CD8-positive, alpha-beta T cell (primary cell): ENCODE measurements at regions of chr17 and their contacts with region 1.

Region 1: DNA sequence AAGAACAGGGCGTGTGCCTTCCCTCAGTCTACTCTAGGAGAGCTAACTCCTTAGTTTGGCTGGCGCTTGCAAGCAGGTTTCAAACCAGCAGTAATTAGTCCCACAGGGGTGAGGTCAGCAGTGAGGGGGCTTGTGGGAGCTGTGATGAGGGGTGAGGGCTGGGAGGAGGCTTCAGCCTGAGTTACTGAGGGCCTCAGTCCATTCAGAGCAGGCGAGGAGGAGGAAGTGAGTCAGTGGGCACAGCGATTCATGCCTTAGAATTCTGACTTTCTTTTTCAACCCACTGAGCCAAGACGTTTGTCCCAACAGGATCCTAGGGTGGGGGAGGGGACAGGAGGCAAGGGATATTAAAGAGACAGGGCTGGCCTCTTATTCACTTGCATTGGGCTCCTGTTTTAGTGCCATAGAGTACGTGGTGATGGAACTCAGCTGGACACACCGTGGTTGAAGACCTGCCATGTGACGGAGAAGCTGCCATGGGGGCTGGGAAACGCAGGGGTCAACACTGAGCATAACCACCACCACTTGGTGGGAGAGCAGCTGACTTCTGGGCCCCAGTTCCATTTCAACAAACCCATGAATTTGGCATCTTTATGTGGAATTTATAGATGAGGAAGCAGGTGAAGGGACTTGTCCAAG is 8.3 kb upstream of the ITGA3 start:
- DNase-seq: no peak
- ATAC-seq: no peak
- H3K4me3 ChIP-seq: no peak overlapping the region
- H3K4me3 Mint-ChIP-seq: no peak overlapping the region
- H3K27ac ChIP-seq: no peak overlapping the region
- H3K27ac Mint-ChIP-seq: no peak overlapping the region
- H3K4me1 ChIP-seq: no peaks in the 10 kb centered on the region
- H3K4me1 Mint-ChIP-seq: no peaks in the 10 kb centered on the region
- H3K27me3 ChIP-seq: no peaks in the 10 kb centered on the region
- H3K27me3 Mint-ChIP-seq: peaks cover 6% of the 10 kb centered on the region
- CTCF ChIP-seq: no peak

Region 2: DNA sequence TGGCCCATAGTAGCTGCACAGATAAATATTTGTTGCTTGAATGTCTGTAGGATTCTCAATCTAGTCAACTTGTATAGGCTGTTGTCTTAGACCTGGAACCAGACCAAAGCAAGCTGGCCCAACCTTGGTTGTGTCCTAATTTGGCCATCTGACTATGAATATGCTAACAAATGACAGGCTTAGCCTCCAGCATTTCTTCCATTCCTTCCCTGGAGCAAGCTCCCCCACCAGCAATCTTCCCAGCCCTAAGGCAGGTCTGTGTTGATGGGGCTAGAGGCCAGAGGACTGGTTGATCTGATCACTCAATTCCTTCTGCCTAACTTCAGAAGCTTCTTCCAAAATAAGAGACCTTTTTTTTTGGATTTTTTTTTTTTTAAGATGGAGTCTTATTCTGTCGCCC is 807.6 kb before region 1 on chr17:
- CTCF ChIA-PET with region 1: no interaction called
- POLR2A ChIA-PET with region 1: no interaction called
- intact Hi-C with region 1: no loop called
- DNase-seq: no peak
- ATAC-seq: no peak
- H3K4me3 ChIP-seq: no peak overlapping the region
- H3K4me3 Mint-ChIP-seq: no peak overlapping the region
- H3K27ac ChIP-seq: no peak overlapping the region
- H3K27ac Mint-ChIP-seq: no peak overlapping the region
- H3K4me1 ChIP-seq: no peaks in the 10 kb centered on the region
- H3K4me1 Mint-ChIP-seq: no peaks in the 10 kb centered on the region
- H3K27me3 ChIP-seq: no peaks in the 10 kb centered on the region
- H3K27me3 Mint-ChIP-seq: no peaks in the 10 kb centered on the region
- CTCF ChIP-seq: no peak

Region 3: GRCh38 chr17:50064258-50065001 is 16.8 kb after region 1 on chr17:
- CTCF ChIA-PET with region 1: no interaction called
- POLR2A ChIA-PET with region 1: no interaction called
- intact Hi-C with region 1: loop called in 1 of 2 experiments (anchors 2 kb)
- DNase-seq: no peak
- ATAC-seq: no peak
- H3K4me3 ChIP-seq: no peak overlapping the region
- H3K4me3 Mint-ChIP-seq: no peak overlapping the region
- H3K27ac ChIP-seq: no peak overlapping the region
- H3K27ac Mint-ChIP-seq: no peak overlapping the region
- H3K4me1 ChIP-seq: no peaks in the 10 kb centered on the region
- H3K4me1 Mint-ChIP-seq: no peaks in the 10 kb centered on the region
- H3K27me3 ChIP-seq: no peaks in the 10 kb centered on the region
- H3K27me3 Mint-ChIP-seq: no peaks in the 10 kb centered on the region
- CTCF ChIP-seq: no peak

Region 4: DNA sequence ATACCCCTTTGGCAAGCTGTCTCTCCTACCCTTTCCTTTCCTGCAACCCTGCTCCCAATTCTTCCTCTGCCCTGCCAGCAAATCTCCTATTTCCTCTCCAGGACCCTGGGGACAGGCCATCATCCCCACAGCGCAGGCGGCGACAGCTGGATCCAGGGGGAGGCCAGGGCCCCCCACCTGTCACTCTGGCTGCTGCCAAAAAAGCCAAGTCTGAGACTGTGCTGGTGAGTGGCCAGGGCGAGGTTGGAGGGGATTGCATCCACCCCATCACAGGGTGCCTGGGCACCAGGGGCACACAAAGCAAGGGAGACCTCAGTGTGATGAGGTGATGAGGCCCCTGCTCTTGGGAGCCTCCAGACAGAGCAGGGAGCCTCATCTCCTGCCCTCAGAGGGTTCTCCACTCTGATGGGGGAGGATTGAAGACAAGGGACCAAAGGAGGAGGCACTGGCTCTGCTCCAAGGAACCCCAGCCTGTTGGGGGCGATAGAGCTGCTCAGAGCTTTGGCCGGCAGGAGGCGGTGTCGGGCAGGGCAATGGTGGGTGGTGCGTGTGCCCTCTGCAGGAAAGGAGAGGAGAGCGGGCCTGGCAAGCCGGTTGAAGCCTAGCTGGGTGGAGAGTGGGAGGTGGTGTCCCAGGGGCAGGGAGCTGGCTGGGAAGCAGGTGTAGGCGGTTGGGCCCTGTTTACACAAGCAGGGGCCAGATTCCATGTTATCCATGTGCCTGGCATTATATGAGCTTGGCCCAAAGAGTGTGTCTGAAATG is 31.9 kb after region 1 on chr17:
- CTCF ChIA-PET with region 1: no interaction called
- POLR2A ChIA-PET with region 1: no interaction called
- intact Hi-C with region 1: no loop called
- DNase-seq: peak in 2 of 9 experiments; percentile 40 to 42
- ATAC-seq: no peak
- H3K4me3 ChIP-seq: no peak overlapping the region
- H3K4me3 Mint-ChIP-seq: no peak overlapping the region
- H3K27ac ChIP-seq: no peak overlapping the region
- H3K27ac Mint-ChIP-seq: no peak overlapping the region
- H3K4me1 ChIP-seq: no peaks in the 10 kb centered on the region
- H3K4me1 Mint-ChIP-seq: no peaks in the 10 kb centered on the region
- H3K27me3 ChIP-seq: no peaks in the 10 kb centered on the region
- H3K27me3 Mint-ChIP-seq: no peaks in the 10 kb centered on the region
- CTCF ChIP-seq: no peak

Region 5: GRCh38 chr17:50312308-50312707 is 264.7 kb after region 1 on chr17:
- CTCF ChIA-PET with region 1: no interaction called
- POLR2A ChIA-PET with region 1: no interaction called
- intact Hi-C with region 1: no loop called
- DNase-seq: no peak
- ATAC-seq: no peak
- H3K4me3 ChIP-seq: no peak overlapping the region
- H3K4me3 Mint-ChIP-seq: no peak overlapping the region
- H3K27ac ChIP-seq: no peak overlapping the region
- H3K27ac Mint-ChIP-seq: no peak overlapping the region
- H3K4me1 ChIP-seq: no peaks in the 10 kb centered on the region
- H3K4me1 Mint-ChIP-seq: no peaks in the 10 kb centered on the region
- H3K27me3 ChIP-seq: no peaks in the 10 kb centered on the region
- H3K27me3 Mint-ChIP-seq: peaks cover 25% of the 10 kb centered on the region
- CTCF ChIP-seq: no peak